ENCODE measurements at regions of chr1 and their contacts with region 1.

Region 1: DNA sequence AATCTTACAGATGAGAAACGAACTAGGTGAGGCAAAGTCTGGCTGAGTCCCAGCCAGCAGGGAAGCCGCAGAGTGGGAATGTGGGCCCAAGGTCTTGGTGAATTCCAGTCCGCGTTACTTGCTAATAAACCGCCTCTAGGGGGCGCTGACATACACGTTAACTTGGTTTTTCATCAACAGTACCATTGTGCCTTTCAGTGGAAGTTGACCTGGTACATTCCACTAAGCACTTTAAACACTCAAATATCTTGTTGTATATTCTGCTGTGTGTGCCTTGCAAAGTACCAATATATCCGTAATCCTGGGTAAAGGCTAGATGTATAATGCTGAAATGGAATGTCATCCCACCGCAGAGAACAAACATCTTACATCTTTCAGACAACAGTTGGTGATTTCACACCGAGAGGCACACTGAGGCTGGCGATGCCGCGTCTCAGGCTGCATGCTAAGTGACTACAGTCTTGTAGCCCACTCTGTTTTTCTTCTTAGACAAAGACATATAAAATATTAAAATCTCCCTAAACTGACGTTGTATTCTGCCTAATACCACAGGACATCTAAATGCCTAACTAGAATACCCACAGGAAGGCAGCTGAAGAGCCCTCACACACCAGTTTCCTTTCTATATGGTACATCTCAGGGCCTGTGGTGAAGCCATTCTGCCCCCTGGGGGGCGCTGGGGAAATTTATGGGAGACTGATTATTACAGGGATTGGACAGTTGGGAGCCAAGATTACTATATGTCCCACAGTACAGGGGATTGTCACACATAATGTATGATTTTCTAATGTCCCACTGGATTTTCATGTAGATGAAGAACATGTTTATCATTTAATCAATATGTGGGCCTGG is 49.2 kb upstream of the C1orf198 start:
- DNase-seq: peak; percentile 90
- ATAC-seq: peak; percentile 79
- H3K4me3 Mint-ChIP-seq: no peak overlapping the region
- H3K27ac Mint-ChIP-seq: peak overlapping the region; percentile 40
- H3K4me1 Mint-ChIP-seq: peaks cover 8% of the 10 kb centered on the region
- H3K27me3 Mint-ChIP-seq: no peaks in the 10 kb centered on the region
- CTCF ChIP-seq: peak; percentile 84

Region 2: GRCh38 chr1:230878591-230878990 is 38.9 kb before region 1 on chr1:
- CTCF ChIA-PET with region 1: no interaction called
- POLR2A ChIA-PET with region 1: no interaction called
- intact Hi-C with region 1: no loop called
- DNase-seq: no peak
- ATAC-seq: no peak
- H3K4me3 Mint-ChIP-seq: no peak overlapping the region
- H3K27ac Mint-ChIP-seq: no peak overlapping the region
- H3K4me1 Mint-ChIP-seq: no peaks in the 10 kb centered on the region
- H3K27me3 Mint-ChIP-seq: peaks cover 47% of the 10 kb centered on the region
- CTCF ChIP-seq: no peak

Region 3: DNA sequence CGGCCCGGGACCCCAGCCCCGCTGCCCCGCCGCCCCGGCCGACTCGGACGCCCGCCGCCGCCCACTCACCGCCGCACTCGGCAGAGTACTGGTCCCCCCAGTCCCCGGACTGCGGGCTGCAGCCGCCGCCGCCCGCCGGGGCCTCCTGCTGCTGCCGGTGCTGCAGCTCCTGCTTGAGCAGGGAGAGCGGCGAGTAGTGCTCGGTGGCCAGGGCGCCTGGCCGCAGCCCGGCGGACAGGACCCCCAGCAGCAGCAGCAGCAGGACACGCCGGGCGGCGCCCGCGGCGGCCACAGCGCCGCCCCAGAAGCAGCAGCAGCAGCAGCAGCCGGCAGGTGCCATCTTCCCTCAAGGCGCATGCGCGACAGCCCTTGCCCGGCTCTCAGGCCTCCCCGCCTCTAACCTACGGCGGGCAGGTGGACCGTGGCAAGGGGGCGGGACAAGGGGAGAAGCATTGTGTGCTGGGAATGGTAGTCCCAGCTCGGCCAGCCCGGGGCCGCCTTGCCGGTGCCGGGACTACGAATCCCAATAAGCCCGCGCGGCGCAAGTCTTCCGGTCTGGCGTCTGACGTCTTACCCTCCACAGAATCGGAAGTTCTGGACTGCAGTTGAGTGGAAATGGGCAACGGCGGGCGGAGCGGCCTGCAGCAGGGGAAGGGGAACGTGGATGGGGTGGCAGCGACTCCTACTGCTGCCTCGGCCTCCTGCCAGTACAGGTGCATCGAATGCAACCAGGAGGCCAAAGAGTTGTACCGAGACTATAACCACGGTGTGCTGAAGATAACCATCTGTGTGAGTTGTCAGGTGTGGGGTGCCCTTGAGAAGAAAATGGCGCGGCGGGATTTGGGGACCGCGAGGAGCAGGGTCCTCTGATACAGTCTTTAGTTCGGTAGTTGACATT is 61.2 kb after region 1 on chr1 and contains the starts of genes ARV1 and TTC13:
- CTCF ChIA-PET with region 1: interaction called, 5 read pairs
- POLR2A ChIA-PET with region 1: interaction called, 6 read pairs
- intact Hi-C with region 1: loop called (anchors 5 kb)
- DNase-seq: peak; percentile 99
- ATAC-seq: peak; percentile 98
- H3K4me3 Mint-ChIP-seq: peak within 1 kb of the TSS; percentile 87
- H3K27ac Mint-ChIP-seq: peak within 1 kb of the TSS; percentile 94
- H3K4me1 Mint-ChIP-seq: peaks cover 36% of the 10 kb centered on the region
- H3K27me3 Mint-ChIP-seq: no peaks in the 10 kb centered on the region
- CTCF ChIP-seq: no peak
- total RNA-seq, gene ARV1: 15.2 to 15.3 TPM
- total RNA-seq, gene TTC13: 13.4 to 15.5 TPM

Region 4: DNA sequence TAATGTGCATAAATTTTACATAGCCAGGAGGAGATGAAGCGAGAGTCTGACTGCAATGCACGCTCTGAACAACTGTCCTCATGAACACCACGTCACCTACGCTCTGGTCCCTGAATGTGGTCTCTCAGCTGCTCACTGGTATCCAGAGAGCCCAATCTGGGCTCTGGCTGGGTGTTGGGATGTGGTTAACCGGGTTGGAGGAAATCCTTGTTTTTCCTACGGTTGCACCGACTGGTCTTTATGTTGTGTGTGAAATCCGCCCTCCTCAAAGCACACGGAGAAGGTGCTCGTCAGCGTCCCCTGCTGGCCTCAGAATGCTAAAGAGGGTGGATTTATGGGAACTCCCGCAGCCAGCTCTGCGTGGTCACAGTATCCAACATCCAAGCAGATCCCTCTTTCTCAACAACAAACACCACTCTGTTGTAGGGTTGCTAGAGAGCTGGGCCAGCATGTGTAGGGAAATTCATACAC is 174.4 kb after region 1 on chr1:
- CTCF ChIA-PET with region 1: interaction called, 10 read pairs
- POLR2A ChIA-PET with region 1: no interaction called
- intact Hi-C with region 1: loop called (anchors 5 kb)
- DNase-seq: peak; percentile 60
- ATAC-seq: no peak
- H3K4me3 Mint-ChIP-seq: no peak overlapping the region
- H3K27ac Mint-ChIP-seq: no peak overlapping the region
- H3K4me1 Mint-ChIP-seq: no peaks in the 10 kb centered on the region
- H3K27me3 Mint-ChIP-seq: peaks cover 24% of the 10 kb centered on the region
- CTCF ChIP-seq: peak; percentile 67

Region 5: GRCh38 chr1:231396643-231397042 is 479.1 kb after region 1 on chr1:
- CTCF ChIA-PET with region 1: no interaction called
- POLR2A ChIA-PET with region 1: no interaction called
- intact Hi-C with region 1: no loop called
- DNase-seq: no peak
- ATAC-seq: no peak
- H3K4me3 Mint-ChIP-seq: no peak overlapping the region
- H3K27ac Mint-ChIP-seq: no peak overlapping the region
- H3K4me1 Mint-ChIP-seq: peaks cover 55% of the 10 kb centered on the region
- H3K27me3 Mint-ChIP-seq: no peaks in the 10 kb centered on the region
- CTCF ChIP-seq: no peak